OCI-LY7 (cell line): ENCODE measurements at regions of chr9 and their contacts with region 1.

Region 1: GRCh38 chr9:35732122-35732799 is at the starts of genes CREB3 and TLN1:
- DNase-seq: peak; percentile 99
- H3K4me3 ChIP-seq: peak within 1 kb of the TSS; percentile 89
- H3K27ac ChIP-seq: peak within 1 kb of the TSS; percentile 77
- H3K4me1 ChIP-seq: peaks cover 56% of the 10 kb centered on the region
- CTCF ChIP-seq: peak; percentile 65
- total RNA-seq, gene CREB3: 16.8 and 18.2 TPM in 2 replicates
- total RNA-seq, gene TLN1: 87.5 and 98.8 TPM in 2 replicates

Region 2: GRCh38 chr9:35616681-35617459 is 115.4 kb before region 1 on chr9:
- CTCF ChIA-PET with region 1: interaction called, 7 read pairs
- POLR2A ChIA-PET with region 1: interaction called, 15 read pairs
- intact Hi-C with region 1: loop called (anchors 1 kb)
- DNase-seq: peak; percentile 79
- H3K4me3 ChIP-seq: peak overlapping the region; percentile 69
- H3K27ac ChIP-seq: peak overlapping the region; percentile 92
- H3K4me1 ChIP-seq: peaks cover 63% of the 10 kb centered on the region
- CTCF ChIP-seq: peak; percentile 65

Region 3: GRCh38 chr9:35664531-35665470 is 67.5 kb before region 1 on chr9 and contains the start of gene ARHGEF39:
- CTCF ChIA-PET with region 1: interaction called, 13 read pairs
- POLR2A ChIA-PET with region 1: interaction called, 18 read pairs
- intact Hi-C with region 1: no loop called
- DNase-seq: peak; percentile 88
- H3K4me3 ChIP-seq: peak within 1 kb of the TSS; percentile 78
- H3K27ac ChIP-seq: peak within 1 kb of the TSS; percentile 85
- H3K4me1 ChIP-seq: peaks cover 62% of the 10 kb centered on the region
- CTCF ChIP-seq: peak; percentile 67
- total RNA-seq, gene ARHGEF39: 22.7 and 30.8 TPM in 2 replicates

Region 4: DNA sequence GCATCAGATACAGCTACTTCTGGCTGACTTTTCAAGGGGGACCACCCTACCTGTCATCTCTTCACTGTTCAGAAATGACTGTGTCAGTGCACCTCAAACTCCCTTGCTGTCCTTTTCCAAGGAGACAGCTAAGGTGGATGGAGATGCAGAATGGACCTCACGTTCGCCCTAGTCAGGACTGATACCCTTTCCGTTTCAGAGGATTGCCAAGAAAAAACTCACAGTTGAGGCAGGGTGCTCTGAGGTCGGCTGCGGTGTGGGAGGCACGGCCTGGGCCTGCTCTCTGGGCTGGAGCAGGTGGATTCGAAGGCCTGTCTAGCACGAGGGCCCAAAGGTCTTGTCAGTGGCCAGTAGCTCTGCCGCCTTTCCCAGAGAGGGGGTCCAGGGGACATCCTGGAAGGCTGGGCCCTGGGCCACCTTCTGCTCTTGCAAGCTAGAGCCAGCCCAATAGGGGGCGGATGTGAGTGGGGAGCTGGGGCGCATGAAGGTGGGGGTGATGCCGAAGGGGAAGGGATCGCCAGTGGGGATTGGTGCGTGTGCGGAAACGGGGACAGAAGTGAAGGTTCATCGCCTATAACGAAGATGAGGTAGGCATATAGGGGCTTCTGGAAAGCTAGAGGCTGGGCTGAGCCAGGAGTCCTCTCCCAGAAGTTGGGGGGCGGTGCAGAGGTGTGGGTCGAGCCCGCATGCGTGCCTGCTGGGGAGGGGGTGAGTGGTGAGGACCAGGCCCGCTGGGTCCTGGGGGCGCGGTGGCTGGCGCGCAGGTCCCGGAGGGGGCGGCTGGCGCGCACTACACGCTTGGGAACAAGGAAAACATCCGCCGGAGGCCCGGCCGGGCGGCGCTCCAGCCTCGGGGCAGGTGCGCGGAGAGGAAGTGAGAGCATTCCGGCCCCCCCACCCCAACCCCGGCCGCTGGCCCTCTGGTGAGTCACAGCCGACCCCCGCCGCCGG is 24.3 kb after region 1 on chr9:
- CTCF ChIA-PET with region 1: interaction called, 4 read pairs
- POLR2A ChIA-PET with region 1: interaction called, 4 read pairs
- intact Hi-C with region 1: loop called (anchors 2 kb)
- DNase-seq: peak; percentile 91
- H3K4me3 ChIP-seq: peak overlapping the region; percentile 74
- H3K27ac ChIP-seq: peak overlapping the region; percentile 94
- H3K4me1 ChIP-seq: peaks cover 66% of the 10 kb centered on the region
- CTCF ChIP-seq: peak; percentile 84

Region 5: GRCh38 chr9:35829084-35829763 is 97.0 kb after region 1 on chr9 and contains the start of gene TMEM8B:
- CTCF ChIA-PET with region 1: no interaction called
- POLR2A ChIA-PET with region 1: interaction called, 3 read pairs
- intact Hi-C with region 1: loop called (anchors 5 kb)
- DNase-seq: peak; percentile 94
- H3K4me3 ChIP-seq: peak within 1 kb of the TSS; percentile 72
- H3K27ac ChIP-seq: no peak within 1 kb of the TSS
- H3K4me1 ChIP-seq: peaks cover 32% of the 10 kb centered on the region
- CTCF ChIP-seq: no peak
- total RNA-seq, gene TMEM8B: 3.1 and 3.2 TPM in 2 replicates

Region 6: DNA sequence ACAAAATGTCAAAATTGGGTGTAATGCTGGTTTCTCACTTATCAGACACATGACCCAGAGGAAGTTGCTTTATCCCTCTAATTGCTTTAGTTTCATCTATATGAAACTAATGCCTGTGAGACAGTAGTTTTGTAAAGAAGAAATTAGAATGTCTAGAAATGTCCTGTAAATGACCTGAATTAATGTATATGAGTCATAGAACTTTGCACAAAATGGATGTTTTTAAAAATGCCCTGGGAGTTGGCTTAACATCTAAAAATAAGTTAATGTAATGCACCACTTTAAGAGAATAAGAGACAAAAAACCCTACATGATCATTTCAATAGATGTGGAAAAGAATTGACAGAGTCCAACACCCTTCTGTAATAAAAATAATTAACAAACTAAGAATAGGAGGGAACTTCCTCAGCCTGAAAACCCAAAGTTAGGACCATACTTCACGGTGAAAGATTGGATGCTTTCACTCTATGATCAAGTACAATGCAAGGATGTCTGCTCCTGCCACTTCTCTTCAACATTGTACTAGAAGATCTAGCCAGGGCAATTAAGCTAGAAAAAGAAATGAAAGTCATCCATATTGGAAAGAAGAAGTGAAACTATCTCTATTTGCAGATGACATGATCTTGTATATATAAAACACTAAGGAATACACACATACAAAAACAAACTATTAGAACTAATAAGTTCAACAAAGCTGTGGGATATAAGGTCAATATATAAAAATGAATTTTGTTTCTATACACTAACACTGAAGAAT is 958.3 kb after region 1 on chr9:
- CTCF ChIA-PET with region 1: no interaction called
- POLR2A ChIA-PET with region 1: no interaction called
- intact Hi-C with region 1: no loop called
- DNase-seq: peak; percentile 28
- H3K4me3 ChIP-seq: no peak overlapping the region
- H3K27ac ChIP-seq: no peak overlapping the region
- H3K4me1 ChIP-seq: peaks cover 6% of the 10 kb centered on the region
- CTCF ChIP-seq: no peak